ENCODE measurements at regions of chr2 and their contacts with region 1.

Region 1: GRCh38 chr2:151238527-151239487 is 22.9 kb downstream of the RBM43 start:
- DNase-seq: peak; percentile 78
- H3K4me3 Mint-ChIP-seq: no peak overlapping the region
- H3K27ac Mint-ChIP-seq: peak overlapping the region; percentile 40
- H3K4me1 Mint-ChIP-seq: peaks cover 16% of the 10 kb centered on the region
- H3K27me3 Mint-ChIP-seq: no peaks in the 10 kb centered on the region
- CTCF ChIP-seq: peak; percentile 91

Region 2: GRCh38 chr2:149597668-149598326 is 1641.0 kb before region 1 on chr2:
- CTCF ChIA-PET with region 1: interaction called, 43 read pairs
- POLR2A ChIA-PET with region 1: no interaction called
- intact Hi-C with region 1: loop called (anchors 1 kb)
- DNase-seq: peak; percentile 79
- H3K4me3 Mint-ChIP-seq: no peak overlapping the region
- H3K27ac Mint-ChIP-seq: no peak overlapping the region
- H3K4me1 Mint-ChIP-seq: peaks cover 12% of the 10 kb centered on the region
- H3K27me3 Mint-ChIP-seq: no peaks in the 10 kb centered on the region
- CTCF ChIP-seq: peak; percentile 57

Region 3: GRCh38 chr2:149994057-149994753 is 1244.6 kb before region 1 on chr2:
- CTCF ChIA-PET with region 1: interaction called, 3 read pairs
- POLR2A ChIA-PET with region 1: no interaction called
- intact Hi-C with region 1: loop called (anchors 5 kb)
- DNase-seq: peak; percentile 98
- H3K4me3 Mint-ChIP-seq: peak overlapping the region; percentile 32
- H3K27ac Mint-ChIP-seq: peak overlapping the region; percentile 78
- H3K4me1 Mint-ChIP-seq: peaks cover 29% of the 10 kb centered on the region
- H3K27me3 Mint-ChIP-seq: no peaks in the 10 kb centered on the region
- CTCF ChIP-seq: no peak

Region 4: DNA sequence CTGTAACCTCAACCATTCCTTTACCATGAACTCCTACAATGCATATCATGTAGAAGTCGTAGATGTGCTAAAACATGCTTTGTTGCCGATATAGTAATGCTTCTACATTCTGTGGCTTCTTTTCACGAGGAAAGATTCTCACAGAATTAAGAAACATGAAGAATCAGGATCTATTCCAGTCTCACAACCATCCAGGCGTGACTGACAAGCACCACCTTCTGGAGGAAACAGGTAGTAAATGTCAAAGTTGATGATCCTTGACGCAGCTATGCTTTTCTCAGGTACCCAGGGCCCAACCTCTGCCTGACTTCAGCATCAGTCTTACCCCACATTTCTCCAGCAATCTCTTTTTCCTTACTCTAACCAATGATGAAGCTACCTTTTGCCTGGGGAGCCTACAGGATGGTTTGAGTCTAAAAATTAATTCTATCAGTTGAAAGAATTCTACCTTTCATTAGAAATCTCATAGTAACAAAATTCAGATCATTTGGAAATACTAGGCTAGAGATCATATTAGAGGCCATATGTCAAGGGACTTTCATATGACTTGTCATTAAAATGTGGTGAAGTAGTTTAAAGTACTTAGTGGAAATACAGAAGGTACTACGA is 628.0 kb before region 1 on chr2:
- CTCF ChIA-PET with region 1: interaction called, 3 read pairs
- POLR2A ChIA-PET with region 1: no interaction called
- intact Hi-C with region 1: loop called (anchors 2 kb)
- DNase-seq: peak; percentile 74
- H3K4me3 Mint-ChIP-seq: no peak overlapping the region
- H3K27ac Mint-ChIP-seq: no peak overlapping the region
- H3K4me1 Mint-ChIP-seq: peaks cover 10% of the 10 kb centered on the region
- H3K27me3 Mint-ChIP-seq: no peaks in the 10 kb centered on the region
- CTCF ChIP-seq: peak; percentile 82

Region 5: GRCh38 chr2:151051574-151052220 is 187.1 kb before region 1 on chr2:
- CTCF ChIA-PET with region 1: interaction called, 21 read pairs
- POLR2A ChIA-PET with region 1: interaction called, 4 read pairs
- intact Hi-C with region 1: loop called (anchors 1 kb)
- DNase-seq: peak; percentile 73
- H3K4me3 Mint-ChIP-seq: no peak overlapping the region
- H3K27ac Mint-ChIP-seq: no peak overlapping the region
- H3K4me1 Mint-ChIP-seq: peaks cover 16% of the 10 kb centered on the region
- H3K27me3 Mint-ChIP-seq: no peaks in the 10 kb centered on the region
- CTCF ChIP-seq: peak; percentile 76

Region 6: GRCh38 chr2:151176661-151177060 is 62.1 kb before region 1 on chr2:
- CTCF ChIA-PET with region 1: interaction called, 12 read pairs
- POLR2A ChIA-PET with region 1: no interaction called
- intact Hi-C with region 1: no loop called
- DNase-seq: no peak
- H3K4me3 Mint-ChIP-seq: no peak overlapping the region
- H3K27ac Mint-ChIP-seq: no peak overlapping the region
- H3K4me1 Mint-ChIP-seq: no peaks in the 10 kb centered on the region
- H3K27me3 Mint-ChIP-seq: peaks cover 19% of the 10 kb centered on the region
- CTCF ChIP-seq: no peak

Region 7: GRCh38 chr2:151315381-151315903 is 76.6 kb after region 1 on chr2:
- CTCF ChIA-PET with region 1: no interaction called
- POLR2A ChIA-PET with region 1: no interaction called
- intact Hi-C with region 1: no loop called
- DNase-seq: no peak
- H3K4me3 Mint-ChIP-seq: no peak overlapping the region
- H3K27ac Mint-ChIP-seq: no peak overlapping the region
- H3K4me1 Mint-ChIP-seq: no peaks in the 10 kb centered on the region
- H3K27me3 Mint-ChIP-seq: no peaks in the 10 kb centered on the region
- CTCF ChIP-seq: no peak

Measured in MCF 10A (cell line).